Activated CD4-positive, alpha-beta T cell treated with anti-CD3 and anti-CD28 coated beads for 36 hours (primary cell): ENCODE measurements at regions of chr2 and their contacts with region 1.

Region 1: GRCh38 chr2:134169788-134170187 is 84.1 kb upstream of the MGAT5 start:
- DNase-seq: peak; percentile 51
- ATAC-seq: peak; percentile 91
- H3K4me3 Mint-ChIP-seq: no peak overlapping the region
- H3K27ac Mint-ChIP-seq: peak overlapping the region; percentile 13
- H3K4me1 Mint-ChIP-seq: peaks cover 85% of the 10 kb centered on the region
- H3K27me3 Mint-ChIP-seq: no peaks in the 10 kb centered on the region

Region 2: GRCh38 chr2:133591164-133591563 is 578.6 kb before region 1 on chr2:
- CTCF ChIA-PET with region 1: no interaction called
- POLR2A ChIA-PET with region 1: no interaction called
- intact Hi-C with region 1: no loop called
- DNase-seq: no peak
- ATAC-seq: no peak
- H3K4me3 Mint-ChIP-seq: no peak overlapping the region
- H3K27ac Mint-ChIP-seq: no peak overlapping the region
- H3K4me1 Mint-ChIP-seq: no peaks in the 10 kb centered on the region
- H3K27me3 Mint-ChIP-seq: peaks cover 6% of the 10 kb centered on the region

Region 3: DNA sequence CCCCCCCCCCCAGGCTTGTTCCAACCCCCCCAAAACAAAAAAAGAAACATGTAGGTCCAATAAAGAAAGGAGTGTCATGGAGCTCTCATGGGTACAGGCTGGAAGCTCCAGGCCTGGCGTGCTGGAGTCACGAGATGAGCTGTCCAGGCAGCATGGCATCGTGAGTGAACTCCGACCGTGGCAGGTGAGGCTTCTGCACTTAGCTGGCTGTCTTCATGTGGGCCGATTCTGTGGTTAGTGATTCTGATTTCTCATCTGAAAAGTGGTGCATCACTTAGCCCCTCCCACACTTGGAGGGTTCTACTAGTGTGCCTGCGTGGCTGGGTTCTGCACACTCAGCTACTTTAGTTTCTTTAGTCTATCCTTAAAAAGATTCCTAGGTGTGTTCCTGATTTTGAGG is 42.3 kb before region 1 on chr2:
- CTCF ChIA-PET with region 1: no interaction called
- POLR2A ChIA-PET with region 1: no interaction called
- intact Hi-C with region 1: loop called (anchors 1 to 2 kb)
- DNase-seq: peak; percentile 84
- ATAC-seq: peak; percentile 92
- H3K4me3 Mint-ChIP-seq: peak overlapping the region; percentile 10
- H3K27ac Mint-ChIP-seq: no peak overlapping the region
- H3K4me1 Mint-ChIP-seq: peaks cover 74% of the 10 kb centered on the region
- H3K27me3 Mint-ChIP-seq: no peaks in the 10 kb centered on the region

Region 4: GRCh38 chr2:134198006-134198634 is 28.3 kb after region 1 on chr2:
- CTCF ChIA-PET with region 1: interaction called, 8 read pairs
- POLR2A ChIA-PET with region 1: interaction called, 15 read pairs
- intact Hi-C with region 1: loop called in 1 of 2 experiments (anchors 1 kb)
- DNase-seq: no peak
- ATAC-seq: peak; percentile 68
- H3K4me3 Mint-ChIP-seq: peak overlapping the region; percentile 25
- H3K27ac Mint-ChIP-seq: peak overlapping the region; percentile 90
- H3K4me1 Mint-ChIP-seq: peaks cover 80% of the 10 kb centered on the region
- H3K27me3 Mint-ChIP-seq: no peaks in the 10 kb centered on the region

Region 5: GRCh38 chr2:134290358-134290757 is 120.6 kb after region 1 on chr2:
- CTCF ChIA-PET with region 1: no interaction called
- POLR2A ChIA-PET with region 1: no interaction called
- intact Hi-C with region 1: loop called in 1 of 2 experiments (anchors 1 kb)
- DNase-seq: peak; percentile 22
- ATAC-seq: peak; percentile 66
- H3K4me3 Mint-ChIP-seq: no peak overlapping the region
- H3K27ac Mint-ChIP-seq: no peak overlapping the region
- H3K4me1 Mint-ChIP-seq: peaks cover 7% of the 10 kb centered on the region
- H3K27me3 Mint-ChIP-seq: no peaks in the 10 kb centered on the region